ENCODE measurements at regions of chr5 and their contacts with region 1.

Region 1: GRCh38 chr5:139633295-139634027 is 14.7 kb upstream of the CXXC5 start:
- DNase-seq: peak; percentile 64 to 68
- ATAC-seq: peak in 7 of 8 donors; percentile 13 to 41 (median 29)
- H3K4me3 ChIP-seq: no peak overlapping the region
- H3K27ac ChIP-seq: no peak overlapping the region
- H3K4me1 ChIP-seq: peaks cover 15 to 44% (median 35%) of the 10 kb centered on the region in 9 donors
- H3K27me3 ChIP-seq: no peaks in the 10 kb centered on the region
- CTCF ChIP-seq: peak; percentile 93 to 99 (median 96)

Region 2: DNA sequence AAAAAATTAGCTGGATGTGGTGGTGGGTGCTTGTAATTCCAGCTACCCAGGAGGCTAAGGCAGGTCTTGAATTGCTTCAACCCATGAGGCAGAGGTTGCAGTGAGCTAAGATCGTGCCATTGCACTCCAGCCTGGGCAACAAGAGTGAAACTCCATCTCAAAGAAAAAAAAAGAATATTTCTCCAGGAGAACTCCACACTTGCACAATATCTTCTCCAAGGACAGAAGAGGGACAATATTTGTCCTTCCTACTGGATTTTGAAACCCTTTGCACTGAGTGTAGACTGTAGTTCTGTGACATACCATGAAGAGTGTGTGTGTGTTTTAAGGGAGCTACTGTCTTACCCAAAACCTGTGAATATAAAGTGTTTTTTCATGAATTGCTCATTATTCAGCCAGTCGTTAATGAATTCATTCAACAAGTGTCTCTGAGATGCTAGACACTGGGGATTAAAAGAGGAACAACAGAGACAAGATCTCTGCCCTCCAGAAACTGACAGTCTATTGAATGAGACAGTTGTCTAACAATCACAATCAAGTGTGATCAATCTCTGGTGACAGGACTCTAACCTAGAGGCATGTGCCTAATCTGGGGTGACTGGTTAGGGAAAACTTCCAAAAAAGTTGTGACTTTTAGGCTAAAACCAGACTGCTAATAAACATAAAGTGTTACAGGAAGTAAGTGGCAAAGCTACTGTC is 82.1 kb before region 1 on chr5:
- intact Hi-C with region 1: no loop called
- DNase-seq: no peak
- ATAC-seq: no peak
- H3K4me3 ChIP-seq: no peak overlapping the region
- H3K27ac ChIP-seq: no peak overlapping the region
- H3K4me1 ChIP-seq: no peaks in the 10 kb centered on the region
- H3K27me3 ChIP-seq: no peaks in the 10 kb centered on the region
- CTCF ChIP-seq: no peak

Region 3: DNA sequence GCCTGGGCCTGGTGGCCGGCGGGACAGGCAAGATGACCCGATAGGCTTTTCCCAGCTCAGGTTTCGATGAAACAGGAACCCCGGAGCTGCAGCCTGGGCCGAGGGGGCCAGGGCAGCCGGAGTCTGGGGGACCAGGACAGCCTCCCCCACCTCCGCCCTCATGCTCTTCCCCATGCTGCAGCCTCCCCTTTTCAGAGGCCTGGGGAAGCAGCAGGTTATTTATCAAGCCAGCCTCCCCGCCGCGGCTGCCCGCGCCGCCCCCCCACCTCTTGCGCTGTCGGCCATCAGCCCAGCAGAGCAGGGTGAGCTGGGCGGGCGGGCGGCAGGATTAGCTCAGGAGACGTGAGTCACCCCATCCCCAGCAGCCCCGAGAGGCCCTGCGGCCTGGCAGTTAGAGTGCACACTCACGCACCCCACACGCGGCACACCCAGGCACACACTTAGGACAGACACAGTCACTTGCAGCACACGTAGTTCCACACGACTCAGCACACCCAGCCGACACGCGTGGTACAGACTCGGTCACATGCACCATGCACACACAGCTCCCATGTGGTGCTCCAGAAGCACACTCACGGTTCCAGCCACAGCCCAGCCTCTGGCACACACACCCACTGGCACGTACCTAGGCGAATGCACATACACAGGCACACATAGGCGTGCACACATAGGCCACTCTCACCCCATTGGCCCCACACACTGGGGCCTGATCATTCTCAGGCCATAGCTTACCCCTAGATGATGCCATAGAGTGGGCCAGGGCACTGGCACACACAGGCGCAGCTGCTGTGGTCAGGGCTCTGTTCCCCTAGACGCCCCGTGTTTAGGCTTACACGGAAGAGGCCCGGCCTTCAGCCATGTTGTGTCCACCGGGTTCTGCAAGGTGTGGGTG is 27.7 kb after region 1 on chr5:
- intact Hi-C with region 1: no loop called
- DNase-seq: peak; percentile 78 to 82
- ATAC-seq: peak; percentile 54 to 78 (median 66)
- H3K4me3 ChIP-seq: peak overlapping the region in 8 of 10 donors; percentile 8 to 49 (median 29)
- H3K27ac ChIP-seq: peak overlapping the region; percentile 86 to 97 (median 92)
- H3K4me1 ChIP-seq: peaks cover 53 to 100% (median 87%) of the 10 kb centered on the region in 9 donors
- H3K27me3 ChIP-seq: no peaks in the 10 kb centered on the region
- CTCF ChIP-seq: no peak

Region 4: DNA sequence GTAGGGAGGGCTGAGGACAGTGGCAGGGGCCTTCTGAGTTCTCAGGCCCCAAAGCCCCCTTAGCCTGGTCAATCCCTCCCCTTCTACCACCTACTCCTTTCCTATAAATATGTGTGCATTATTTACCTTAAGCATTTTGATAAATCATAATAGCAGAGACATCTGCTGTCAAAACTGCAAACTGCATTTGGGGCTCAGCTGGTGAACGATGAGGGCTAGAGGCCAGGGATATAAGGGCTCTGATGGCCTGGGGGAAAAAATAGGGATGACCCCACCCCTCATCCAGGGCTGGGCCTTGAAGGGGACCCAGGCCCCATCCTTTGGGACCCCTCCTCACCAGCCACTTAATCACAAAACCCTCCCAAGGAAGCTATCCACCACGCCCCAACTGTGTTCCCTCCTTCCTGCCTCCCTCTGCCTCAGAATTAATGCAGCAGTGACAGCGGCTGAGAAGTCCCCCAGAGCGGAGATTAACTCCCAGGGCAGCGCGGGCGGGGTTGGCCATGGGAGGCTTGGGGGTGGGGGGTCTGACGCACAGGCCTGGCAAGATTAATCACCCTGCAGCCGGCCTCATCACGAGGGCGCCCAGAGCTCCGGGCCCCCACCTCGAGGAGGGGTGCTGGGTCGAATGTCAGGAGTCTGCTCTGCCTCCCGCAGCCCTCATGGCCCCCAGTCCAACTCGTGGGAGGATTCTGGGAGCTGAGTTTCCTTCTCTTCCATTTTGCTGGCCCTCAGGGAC is 56.8 kb after region 1 on chr5:
- intact Hi-C with region 1: loop called in 8 of 10 experiments (anchors 1 to 5 kb)
- DNase-seq: no peak
- ATAC-seq: peak in 7 of 8 donors; percentile 1 to 38 (median 32)
- H3K4me3 ChIP-seq: peak overlapping the region in 1 of 10 donors; percentile 5
- H3K27ac ChIP-seq: peak overlapping the region in 7 of 10 donors; percentile 5 to 73 (median 43)
- H3K4me1 ChIP-seq: peaks cover 17 to 85% (median 54%) of the 10 kb centered on the region in 9 donors
- H3K27me3 ChIP-seq: no peaks in the 10 kb centered on the region
- CTCF ChIP-seq: peak; percentile 22 to 79 (median 70)

Region 5: GRCh38 chr5:139711067-139711905 is 77.8 kb after region 1 on chr5:
- intact Hi-C with region 1: loop called in 1 of 10 experiments (anchors 2 kb)
- DNase-seq: peak in 1 of 2 donors; percentile 45
- ATAC-seq: peak in 7 of 8 donors; percentile 2 to 21 (median 6)
- H3K4me3 ChIP-seq: peak overlapping the region; percentile 18 to 65 (median 60)
- H3K27ac ChIP-seq: peak overlapping the region in 7 of 10 donors; percentile 11 to 88 (median 85)
- H3K4me1 ChIP-seq: peaks cover 12 to 40% (median 36%) of the 10 kb centered on the region in 9 donors
- H3K27me3 ChIP-seq: peaks cover 0 to 44% (median 0%) of the 10 kb centered on the region in 7 donors
- CTCF ChIP-seq: peak in 2 of 9 donors; percentile 10 to 24

Region 6: DNA sequence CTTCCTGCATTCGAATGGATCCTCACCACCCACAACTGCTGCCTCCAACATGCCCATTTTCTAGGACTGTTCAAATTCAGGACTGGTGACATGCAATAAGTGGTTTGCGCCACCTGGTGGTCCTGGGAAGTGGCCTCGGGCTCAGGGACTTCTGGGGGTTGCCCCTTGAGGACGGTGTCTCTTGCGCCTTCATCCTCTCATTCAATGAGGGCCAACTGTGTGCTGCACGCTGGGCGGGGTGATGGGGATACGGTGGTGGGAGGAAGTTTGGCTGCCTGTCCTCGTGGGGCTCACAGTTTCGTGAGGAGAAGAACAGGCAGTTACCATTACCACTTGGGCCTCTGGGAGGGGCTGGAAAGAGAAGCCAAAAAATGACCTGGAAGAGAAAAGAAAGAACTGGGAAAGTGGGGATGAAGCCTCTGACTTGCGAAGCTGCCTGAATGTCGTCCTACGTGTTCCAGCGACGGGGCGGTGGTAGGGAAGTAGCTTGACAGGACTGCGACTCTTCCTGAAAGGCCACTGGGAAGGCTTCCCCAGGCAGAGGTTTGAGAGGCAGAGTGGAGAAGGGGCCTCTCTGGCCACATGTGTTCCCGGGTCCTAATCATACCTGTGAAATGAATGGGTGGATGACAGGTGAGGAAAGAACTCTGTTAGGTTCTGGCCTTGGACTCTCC is 211.1 kb after region 1 on chr5:
- intact Hi-C with region 1: loop called in 2 of 10 experiments (anchors 10 kb)
- DNase-seq: peak; percentile 66 to 69
- ATAC-seq: peak in 4 of 8 donors; percentile 29 to 37 (median 35)
- H3K4me3 ChIP-seq: no peak overlapping the region
- H3K27ac ChIP-seq: no peak overlapping the region
- H3K4me1 ChIP-seq: peaks cover 3 to 25% (median 17%) of the 10 kb centered on the region in 9 donors
- H3K27me3 ChIP-seq: peaks cover 0 to 44% (median 0%) of the 10 kb centered on the region in 7 donors
- CTCF ChIP-seq: peak; percentile 38 to 76 (median 69)

Region 7: GRCh38 chr5:140107312-140108083 is 474.0 kb after region 1 on chr5:
- intact Hi-C with region 1: no loop called
- DNase-seq: peak; percentile 93 to 95
- ATAC-seq: peak; percentile 97 to 99 (median 98)
- H3K4me3 ChIP-seq: peak overlapping the region; percentile 61 to 85 (median 76)
- H3K27ac ChIP-seq: peak overlapping the region; percentile 94 to 100 (median 98)
- H3K4me1 ChIP-seq: peaks cover 0 to 53% (median 39%) of the 10 kb centered on the region in 9 donors
- H3K27me3 ChIP-seq: peaks cover 0 to 45% (median 0%) of the 10 kb centered on the region in 7 donors
- CTCF ChIP-seq: peak in 6 of 9 donors; percentile 2 to 53 (median 36)

Measured in heart right ventricle (tissue), 16 donors.